Tibial artery (tissue), 4 donors: ENCODE measurements at regions of chr3 and their contacts with region 1.

Region 1: GRCh38 chr3:127822698-127823425 is 547 bp upstream of the MGLL start:
- DNase-seq: peak; percentile 34 to 89
- H3K4me3 ChIP-seq: peak overlapping the region; percentile 89 to 98
- H3K27ac ChIP-seq: peak overlapping the region; percentile 90 to 93
- H3K4me1 ChIP-seq: peaks cover 0 to 36% (median 29%) of the 10 kb centered on the region in 4 donors
- H3K27me3 ChIP-seq: no peaks in the 10 kb centered on the region
- CTCF ChIP-seq: peak; percentile 47 to 56

Region 2: GRCh38 chr3:127467391-127467790 is 355.5 kb before region 1 on chr3:
- intact Hi-C with region 1: no loop called
- DNase-seq: no peak
- H3K4me3 ChIP-seq: no peak overlapping the region
- H3K27ac ChIP-seq: no peak overlapping the region
- H3K4me1 ChIP-seq: no peaks in the 10 kb centered on the region
- H3K27me3 ChIP-seq: peaks cover 0 to 16% of the 10 kb centered on the region in 2 donors
- CTCF ChIP-seq: no peak

Region 3: GRCh38 chr3:127697551-127698240 is 125.2 kb before region 1 on chr3:
- intact Hi-C with region 1: loop called (anchors 2 kb)
- DNase-seq: peak; percentile 95 to 96
- H3K4me3 ChIP-seq: peak overlapping the region; percentile 4 to 38
- H3K27ac ChIP-seq: peak overlapping the region; percentile 82 to 96
- H3K4me1 ChIP-seq: peaks cover 7 to 67% (median 52%) of the 10 kb centered on the region in 4 donors
- H3K27me3 ChIP-seq: no peaks in the 10 kb centered on the region
- CTCF ChIP-seq: peak in 1 of 2 experiments; percentile 9

Region 4: GRCh38 chr3:127747723-127748521 is 74.9 kb before region 1 on chr3:
- intact Hi-C with region 1: loop called (anchors 2 kb)
- DNase-seq: peak; percentile 95 to 98
- H3K4me3 ChIP-seq: no peak overlapping the region
- H3K27ac ChIP-seq: peak overlapping the region; percentile 75 to 90
- H3K4me1 ChIP-seq: peaks cover 3 to 66% (median 40%) of the 10 kb centered on the region in 4 donors
- H3K27me3 ChIP-seq: no peaks in the 10 kb centered on the region
- CTCF ChIP-seq: peak; percentile 19 to 37

Region 5: DNA sequence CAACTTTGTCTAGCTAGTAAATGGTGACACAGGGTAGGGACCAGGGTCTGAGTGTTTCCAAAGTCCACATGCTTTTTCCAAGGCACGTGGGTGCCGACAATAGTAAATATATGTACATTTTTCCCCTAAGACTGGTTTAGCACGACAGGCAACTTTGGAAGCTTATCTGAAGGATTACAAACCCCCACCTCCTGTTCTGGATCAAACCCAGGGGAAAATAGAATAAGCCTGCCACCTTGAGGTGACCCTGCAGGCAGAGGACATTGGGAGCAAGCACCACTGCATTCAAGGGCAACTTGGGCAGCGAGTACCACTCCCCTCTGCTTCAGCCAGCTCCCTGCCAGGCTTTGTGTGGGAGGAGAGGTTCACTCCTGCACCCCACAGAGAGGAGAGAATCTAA is 137.0 kb after region 1 on chr3:
- intact Hi-C with region 1: loop called (anchors 5 kb)
- DNase-seq: no peak
- H3K4me3 ChIP-seq: no peak overlapping the region
- H3K27ac ChIP-seq: no peak overlapping the region
- H3K4me1 ChIP-seq: peaks cover 0 to 9% (median 2%) of the 10 kb centered on the region in 4 donors
- H3K27me3 ChIP-seq: no peaks in the 10 kb centered on the region
- CTCF ChIP-seq: peak in 1 of 2 experiments; percentile 19

Region 6: GRCh38 chr3:128383316-128384235 is 560.7 kb after region 1 on chr3:
- intact Hi-C with region 1: no loop called
- DNase-seq: peak; percentile 59 to 87
- H3K4me3 ChIP-seq: no peak overlapping the region
- H3K27ac ChIP-seq: peak overlapping the region; percentile 69 to 72
- H3K4me1 ChIP-seq: peaks cover 0 to 65% (median 57%) of the 10 kb centered on the region in 4 donors
- H3K27me3 ChIP-seq: no peaks in the 10 kb centered on the region
- CTCF ChIP-seq: no peak